ENCODE measurements at regions of chr1 and their contacts with region 1.

Region 1: DNA sequence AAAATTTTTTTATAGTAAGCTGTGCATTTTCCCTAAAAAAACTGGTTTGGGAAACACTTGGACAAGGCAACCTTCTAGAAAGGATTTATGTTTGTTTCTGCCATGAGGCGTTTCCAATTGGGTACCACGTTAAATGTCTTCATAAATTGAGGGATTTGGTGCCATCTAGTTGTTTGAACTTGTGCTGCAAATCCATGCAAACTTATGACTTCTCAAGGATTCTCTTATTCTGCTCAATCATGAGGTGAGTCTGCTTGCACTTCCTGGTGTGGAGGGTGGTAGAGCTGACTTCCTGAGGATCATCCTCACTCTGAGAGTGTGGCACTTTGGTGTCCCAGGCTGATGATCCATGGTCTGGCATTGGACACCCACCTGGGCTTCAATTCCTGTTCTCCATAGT is 123.3 kb downstream of the PCNX2 start:
- DNase-seq: no peak
- ATAC-seq: peak; percentile 57

Region 2: DNA sequence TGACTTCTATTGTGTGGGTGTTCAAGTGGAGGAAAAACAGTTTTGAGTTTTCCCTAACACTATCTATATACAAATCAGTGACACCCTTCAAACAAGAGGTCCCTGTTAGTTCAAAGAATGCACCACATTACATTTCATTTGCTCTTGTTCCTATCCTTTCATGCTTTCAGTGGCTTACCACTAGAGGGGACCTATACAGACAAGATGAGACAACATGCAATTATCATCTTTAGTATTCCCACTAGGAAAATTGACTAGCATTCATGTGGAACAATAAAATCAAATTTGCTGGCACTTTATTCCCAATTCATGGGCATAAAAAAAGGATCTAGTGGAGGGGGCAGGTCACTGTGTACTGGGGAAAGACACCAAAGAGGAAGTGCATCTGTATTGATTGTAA is 529.0 kb before region 1 on chr1:
- intact Hi-C with region 1: loop called (anchors 5 kb)
- DNase-seq: no peak
- ATAC-seq: no peak

Measured in left ventricle myocardium superior (tissue), 1 donor.